ENCODE measurements at regions of chr10 and their contacts with region 1.

Region 1: DNA sequence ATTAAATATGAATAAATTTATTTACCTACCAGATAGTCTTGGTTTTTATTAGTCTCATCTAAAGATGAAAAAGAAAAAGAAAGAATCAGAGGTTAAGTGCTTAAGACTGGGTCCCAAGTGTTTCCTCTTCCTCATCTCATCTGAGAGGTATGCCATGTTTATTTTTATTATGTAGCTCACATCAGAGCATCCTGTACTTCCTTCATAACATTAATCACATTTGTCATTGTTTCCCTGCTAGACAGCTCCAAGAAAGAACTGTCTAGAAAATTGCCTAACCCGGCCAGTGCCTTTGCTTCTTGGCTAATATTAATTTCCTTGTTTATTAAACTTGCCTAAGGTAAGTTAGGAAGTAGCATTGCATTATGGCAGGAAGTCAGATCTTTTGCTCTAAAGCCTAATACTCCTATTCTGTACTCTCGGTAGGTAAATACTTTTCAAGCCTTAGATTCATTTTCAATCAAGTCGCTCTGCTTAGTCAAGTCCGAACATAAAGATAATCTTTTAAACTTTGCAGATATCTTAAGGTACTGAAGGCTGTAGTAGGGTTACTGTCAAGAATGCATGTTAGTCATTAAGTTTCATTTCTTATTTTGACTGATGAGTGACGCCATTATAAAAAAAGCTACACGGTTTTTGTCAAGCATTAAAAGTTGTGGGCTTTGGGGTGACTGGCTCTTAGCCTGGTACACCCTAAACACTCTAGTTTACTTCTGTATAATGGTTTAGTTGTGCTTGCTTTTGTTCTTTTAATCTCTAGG is 47.4 kb downstream of the ZMYND11 start:
- DNase-seq: peak; percentile 30
- ATAC-seq: peak; percentile 96
- H3K4me3 Mint-ChIP-seq: peak overlapping the region; percentile 23
- H3K27ac Mint-ChIP-seq: peak overlapping the region; percentile 80
- H3K4me1 Mint-ChIP-seq: peaks cover 29% of the 10 kb centered on the region
- H3K27me3 Mint-ChIP-seq: no peaks in the 10 kb centered on the region

Region 2: DNA sequence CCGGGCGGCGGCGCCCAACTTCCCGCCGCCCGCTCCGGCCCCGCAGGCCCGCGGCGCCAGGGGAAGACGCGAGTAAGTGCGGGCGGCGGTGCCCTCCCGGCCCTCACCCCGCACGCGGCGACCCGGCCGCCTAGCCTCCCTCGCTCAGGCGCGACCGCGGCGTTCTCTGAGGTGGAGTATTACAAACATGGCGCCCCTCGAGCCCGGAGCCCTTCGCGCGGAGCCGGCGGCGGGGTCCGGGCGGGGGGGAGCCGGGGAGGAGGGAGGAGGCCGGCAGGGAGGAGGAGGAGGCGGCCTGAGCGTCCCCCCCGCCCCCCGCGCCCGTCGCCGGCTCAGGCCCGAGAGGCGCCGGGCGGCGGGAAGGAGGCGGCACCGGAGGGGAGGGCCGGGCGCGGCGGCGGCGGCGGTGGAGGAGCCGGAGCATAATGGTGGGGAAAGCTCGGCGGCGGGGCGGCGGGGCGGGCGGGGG is 47.5 kb before region 1 on chr10 and contains the start of gene ZMYND11:
- CTCF ChIA-PET with region 1: no interaction called
- POLR2A ChIA-PET with region 1: no interaction called
- intact Hi-C with region 1: loop called in 1 of 2 experiments (anchors 2 kb)
- DNase-seq: peak; percentile 74
- ATAC-seq: peak; percentile 25
- H3K4me3 Mint-ChIP-seq: peak within 1 kb of the TSS; percentile 84
- H3K27ac Mint-ChIP-seq: peak within 1 kb of the TSS; percentile 90
- H3K4me1 Mint-ChIP-seq: peaks cover 43% of the 10 kb centered on the region
- H3K27me3 Mint-ChIP-seq: no peaks in the 10 kb centered on the region
- total RNA-seq, gene ZMYND11: 13.2 to 16.9 TPM

Region 3: GRCh38 chr10:154348-154747 is 28.3 kb before region 1 on chr10:
- CTCF ChIA-PET with region 1: no interaction called
- POLR2A ChIA-PET with region 1: no interaction called
- intact Hi-C with region 1: no loop called
- DNase-seq: peak; percentile 50
- ATAC-seq: peak; percentile 58
- H3K4me3 Mint-ChIP-seq: no peak overlapping the region
- H3K27ac Mint-ChIP-seq: no peak overlapping the region
- H3K4me1 Mint-ChIP-seq: peaks cover 28% of the 10 kb centered on the region
- H3K27me3 Mint-ChIP-seq: no peaks in the 10 kb centered on the region

Region 4: DNA sequence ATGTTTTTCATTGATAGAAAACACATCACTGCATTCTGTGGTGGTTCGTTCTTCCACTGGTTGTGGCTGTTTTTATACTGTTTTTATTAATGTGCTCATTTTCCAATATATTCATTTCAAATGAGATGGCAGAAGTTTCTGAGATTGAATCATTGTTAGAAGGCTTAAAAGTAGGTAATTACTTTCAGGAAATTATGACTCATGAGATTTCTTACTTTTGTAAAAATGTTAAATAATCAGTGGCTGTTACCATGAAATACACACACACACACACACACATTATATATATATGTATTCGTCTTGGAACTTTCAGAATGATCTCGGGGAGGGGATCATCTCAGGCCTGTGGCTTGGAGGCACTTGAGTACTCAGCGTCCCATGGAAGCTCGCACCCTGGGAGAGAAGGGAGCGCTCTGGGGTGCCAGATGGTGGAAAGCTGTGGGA is 18.7 kb after region 1 on chr10:
- CTCF ChIA-PET with region 1: no interaction called
- POLR2A ChIA-PET with region 1: no interaction called
- intact Hi-C with region 1: loop called (anchors 1 to 2 kb)
- DNase-seq: peak; percentile 10
- ATAC-seq: peak; percentile 51
- H3K4me3 Mint-ChIP-seq: no peak overlapping the region
- H3K27ac Mint-ChIP-seq: no peak overlapping the region
- H3K4me1 Mint-ChIP-seq: peaks cover 14% of the 10 kb centered on the region
- H3K27me3 Mint-ChIP-seq: no peaks in the 10 kb centered on the region

Measured in activated CD4-positive, alpha-beta T cell treated with anti-CD3 and anti-CD28 coated beads for 36 hours (primary cell).